AG04449 (cell line): ENCODE measurements at regions of chr20 and their contacts with region 1.

Region 1: DNA sequence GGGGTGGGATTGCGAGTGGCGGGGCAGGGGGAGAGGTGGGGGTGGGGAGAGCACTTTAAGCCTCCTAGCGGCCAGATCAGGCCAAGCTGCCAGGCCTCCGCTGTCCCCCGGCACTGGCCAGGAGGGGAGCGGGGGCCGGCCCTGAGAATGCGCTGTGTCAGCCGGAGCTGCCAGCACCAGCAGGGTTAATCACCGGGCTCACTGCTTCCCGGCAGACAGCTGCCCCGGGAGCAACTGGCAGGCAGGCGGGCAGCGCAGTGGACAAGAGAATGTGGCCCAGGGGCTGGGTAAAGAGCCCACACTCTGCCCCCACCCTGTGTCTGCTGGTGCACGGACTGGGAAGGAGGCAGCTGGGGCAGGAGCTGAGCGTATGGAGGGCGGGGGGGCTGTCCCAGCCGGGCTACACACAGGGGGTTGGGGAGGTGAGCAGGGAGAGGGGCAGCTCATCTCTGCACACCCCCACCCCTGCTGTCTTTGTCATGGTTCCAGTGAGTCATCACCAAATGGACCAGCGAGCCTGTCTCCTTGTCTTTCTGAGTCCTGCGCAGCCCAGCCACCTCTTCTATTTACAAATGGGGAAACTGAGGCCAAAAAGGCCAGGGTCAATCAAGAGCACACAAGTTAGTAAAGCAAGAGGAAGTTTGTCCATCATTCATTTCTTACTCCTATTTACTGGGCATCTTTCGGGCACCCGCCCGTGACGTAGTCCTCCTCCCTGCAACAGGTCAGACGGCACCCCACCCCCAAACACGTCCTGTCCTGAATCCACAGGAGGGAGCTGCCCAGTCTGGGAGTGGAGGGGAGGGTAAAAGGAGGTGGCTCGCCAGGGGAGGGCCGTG is 2.1 kb upstream of the LAMA5 start:
- DNase-seq: no peak
- H3K4me3 ChIP-seq: no peak overlapping the region; the same call in 1 of the 2 replicates
- CTCF ChIP-seq: peak; percentile 53

Region 2: GRCh38 chr20:62382306-62383198 is 13.4 kb after region 1 on chr20:
- CTCF ChIA-PET with region 1: interaction called, 27 read pairs
- POLR2A ChIA-PET with region 1: interaction called, 4 read pairs
- DNase-seq: no peak
- H3K4me3 ChIP-seq: no peak overlapping the region
- CTCF ChIP-seq: peak; percentile 96